ENCODE measurements at regions of chr1 and their contacts with region 1.

Region 1: DNA sequence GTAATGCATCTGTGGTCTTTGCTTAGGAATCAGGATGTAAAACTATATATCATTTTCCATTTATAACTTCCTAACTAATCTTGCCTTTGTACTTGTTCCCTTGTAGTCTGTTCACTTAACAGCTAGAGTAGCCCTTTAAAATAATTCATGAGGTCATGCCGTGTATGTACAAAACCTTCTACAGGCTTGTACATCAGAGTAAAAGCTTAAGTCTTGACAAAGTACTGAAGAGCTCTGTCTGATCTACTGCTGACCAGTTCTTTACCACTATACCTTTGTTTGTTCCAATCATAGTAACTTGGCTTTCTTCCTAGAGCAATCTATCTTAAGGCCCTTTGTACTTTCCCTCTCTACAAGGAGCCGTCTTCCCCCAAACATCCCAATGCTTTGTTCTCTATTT is 90.7 kb upstream of the KIAA1614 start:
- DNase-seq: no peak
- ATAC-seq: no peak
- H3K4me3 ChIP-seq: no peak overlapping the region
- H3K27ac ChIP-seq: no peak overlapping the region
- H3K4me1 ChIP-seq: peaks cover 5% of the 10 kb centered on the region; the same call in 1 of the 2 replicates
- H3K27me3 ChIP-seq: no peaks in the 10 kb centered on the region
- CTCF ChIP-seq: no peak

Region 2: GRCh38 chr1:180791806-180792205 is 30.2 kb before region 1 on chr1:
- CTCF ChIA-PET with region 1: no interaction called
- POLR2A ChIA-PET with region 1: no interaction called
- intact Hi-C with region 1: loop called (anchors 5 kb)
- DNase-seq: peak; percentile 67
- ATAC-seq: peak; percentile 84
- H3K4me3 ChIP-seq: no peak overlapping the region
- H3K27ac ChIP-seq: peak overlapping the region; percentile 16; the same call in 1 of the 2 replicates
- H3K4me1 ChIP-seq: peaks cover 13% of the 10 kb centered on the region
- H3K27me3 ChIP-seq: no peaks in the 10 kb centered on the region
- CTCF ChIP-seq: no peak

Region 3: GRCh38 chr1:181105134-181106021 is 283.4 kb after region 1 on chr1:
- CTCF ChIA-PET with region 1: no interaction called
- POLR2A ChIA-PET with region 1: no interaction called
- intact Hi-C with region 1: no loop called
- DNase-seq: peak; percentile 85
- ATAC-seq: peak; percentile 72
- H3K4me3 ChIP-seq: peak overlapping the region; percentile 68
- H3K27ac ChIP-seq: peak overlapping the region; percentile 91
- H3K4me1 ChIP-seq: peaks cover 64% of the 10 kb centered on the region
- H3K27me3 ChIP-seq: no peaks in the 10 kb centered on the region
- CTCF ChIP-seq: no peak